Activated B cell treated with CpG ODN at 0.5 μM for 24 hours (primary cell): ENCODE measurements at regions of chr20 and their contacts with region 1.

Region 1: DNA sequence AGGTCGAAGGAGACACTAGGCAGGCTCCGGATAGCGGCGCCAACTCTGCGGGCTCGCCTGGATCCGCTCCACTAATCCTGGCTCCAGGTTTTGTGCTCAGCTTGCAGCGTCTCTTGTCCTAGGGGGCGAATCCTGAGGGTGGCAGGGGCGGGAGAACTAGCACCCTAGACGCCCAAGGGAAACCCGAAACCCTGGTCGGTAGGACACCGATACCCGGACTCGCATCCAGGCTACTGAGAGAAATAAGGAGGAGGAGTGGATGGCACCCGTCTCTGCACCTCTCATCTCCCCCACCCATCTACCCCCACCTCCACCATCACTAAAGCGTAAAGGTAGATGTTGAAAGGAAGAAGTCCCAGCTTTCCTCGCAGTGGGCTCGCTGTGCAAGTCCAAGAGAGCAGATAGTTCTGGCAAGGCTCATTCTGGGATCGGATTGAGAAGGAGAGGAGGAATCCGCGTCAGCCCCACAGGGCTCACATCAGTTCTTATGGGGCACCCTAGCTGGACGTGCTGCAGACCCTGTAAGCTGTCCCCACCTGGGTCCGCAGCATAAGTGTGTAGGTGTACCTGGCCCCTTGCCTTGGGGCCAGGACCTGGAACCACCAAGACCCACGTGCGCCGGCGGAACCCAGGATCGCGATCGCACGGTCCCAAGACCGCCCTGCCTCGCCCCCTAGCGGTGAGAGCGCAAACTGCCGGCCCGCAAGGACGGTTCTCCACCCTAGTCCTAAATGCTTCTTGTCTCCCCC is 6.9 kb downstream of the SLC32A1 start:
- DNase-seq: peak; percentile 68
- ATAC-seq: peak; percentile 76
- H3K4me3 Mint-ChIP-seq: peak overlapping the region; percentile 65
- H3K27ac Mint-ChIP-seq: no peak overlapping the region
- H3K4me1 Mint-ChIP-seq: peaks cover 52% of the 10 kb centered on the region
- H3K27me3 Mint-ChIP-seq: peaks cover 88% of the 10 kb centered on the region
- CTCF ChIP-seq: peak; percentile 77

Region 2: GRCh38 chr20:37845241-37845711 is 885.9 kb before region 1 on chr20:
- CTCF ChIA-PET with region 1: no interaction called
- POLR2A ChIA-PET with region 1: no interaction called
- intact Hi-C with region 1: no loop called
- DNase-seq: no peak
- ATAC-seq: no peak
- H3K4me3 Mint-ChIP-seq: no peak overlapping the region
- H3K27ac Mint-ChIP-seq: no peak overlapping the region
- H3K4me1 Mint-ChIP-seq: no peaks in the 10 kb centered on the region
- H3K27me3 Mint-ChIP-seq: no peaks in the 10 kb centered on the region
- CTCF ChIP-seq: no peak

Region 3: GRCh38 chr20:38674092-38674764 is 56.9 kb before region 1 on chr20:
- CTCF ChIA-PET with region 1: interaction called, 3 read pairs
- POLR2A ChIA-PET with region 1: no interaction called
- intact Hi-C with region 1: loop called (anchors 2 kb)
- DNase-seq: peak; percentile 54
- ATAC-seq: peak; percentile 96
- H3K4me3 Mint-ChIP-seq: peak overlapping the region; percentile 86
- H3K27ac Mint-ChIP-seq: no peak overlapping the region
- H3K4me1 Mint-ChIP-seq: peaks cover 11% of the 10 kb centered on the region
- H3K27me3 Mint-ChIP-seq: peaks cover 26% of the 10 kb centered on the region
- CTCF ChIP-seq: no peak

Region 4: GRCh38 chr20:38692436-38693411 is 38.4 kb before region 1 on chr20:
- CTCF ChIA-PET with region 1: no interaction called
- POLR2A ChIA-PET with region 1: no interaction called
- intact Hi-C with region 1: no loop called
- DNase-seq: no peak
- ATAC-seq: no peak
- H3K4me3 Mint-ChIP-seq: no peak overlapping the region
- H3K27ac Mint-ChIP-seq: no peak overlapping the region
- H3K4me1 Mint-ChIP-seq: no peaks in the 10 kb centered on the region
- H3K27me3 Mint-ChIP-seq: peaks cover 22% of the 10 kb centered on the region
- CTCF ChIP-seq: no peak

Region 5: DNA sequence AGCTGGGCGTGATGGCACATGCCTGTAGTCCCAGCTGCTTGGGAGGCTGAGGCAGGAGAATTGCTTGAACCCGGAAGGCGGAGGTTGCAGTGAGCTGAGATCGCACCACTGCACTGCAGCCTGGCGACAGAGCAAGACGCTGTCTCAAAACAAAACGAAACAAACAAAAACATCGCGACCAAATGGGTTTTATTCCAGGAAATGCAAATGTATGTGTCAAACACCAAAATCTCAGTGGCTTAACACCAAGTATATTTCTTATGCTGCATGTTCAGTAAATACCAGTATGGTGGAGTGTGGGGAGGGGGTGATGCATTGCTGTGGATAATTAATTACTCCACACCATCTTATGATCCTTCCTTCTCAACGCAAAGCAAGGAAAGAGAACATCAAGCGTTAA is 45.2 kb after region 1 on chr20:
- CTCF ChIA-PET with region 1: no interaction called
- POLR2A ChIA-PET with region 1: no interaction called
- intact Hi-C with region 1: no loop called
- DNase-seq: no peak
- ATAC-seq: no peak
- H3K4me3 Mint-ChIP-seq: no peak overlapping the region
- H3K27ac Mint-ChIP-seq: peak overlapping the region; percentile 30
- H3K4me1 Mint-ChIP-seq: no peaks in the 10 kb centered on the region
- H3K27me3 Mint-ChIP-seq: no peaks in the 10 kb centered on the region
- CTCF ChIP-seq: no peak

Region 6: DNA sequence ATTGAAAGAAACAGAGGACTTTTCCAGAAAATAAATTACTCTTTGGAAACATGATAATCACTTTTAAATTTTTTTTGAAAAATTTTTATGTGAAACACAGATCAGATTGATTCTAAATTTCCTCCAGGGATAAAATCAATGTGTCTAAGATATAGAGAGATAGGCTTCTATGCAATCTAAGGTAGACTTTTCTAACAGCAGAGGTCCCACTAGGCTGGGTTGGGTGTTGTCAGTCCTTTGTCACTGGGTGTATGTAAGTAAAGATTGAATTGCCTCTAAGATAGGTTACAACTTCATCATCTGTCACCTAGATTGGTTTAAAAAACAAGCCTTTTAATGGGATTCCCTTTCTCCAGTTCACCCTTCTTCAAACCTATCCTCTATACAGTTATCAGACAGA is 680.9 kb after region 1 on chr20:
- CTCF ChIA-PET with region 1: no interaction called
- POLR2A ChIA-PET with region 1: no interaction called
- intact Hi-C with region 1: no loop called
- DNase-seq: no peak
- ATAC-seq: no peak
- H3K4me3 Mint-ChIP-seq: no peak overlapping the region
- H3K27ac Mint-ChIP-seq: no peak overlapping the region
- H3K4me1 Mint-ChIP-seq: no peaks in the 10 kb centered on the region
- H3K27me3 Mint-ChIP-seq: no peaks in the 10 kb centered on the region
- CTCF ChIP-seq: no peak